PC-9 (cell line): ENCODE measurements at regions of chr9 and their contacts with region 1.

Region 1: DNA sequence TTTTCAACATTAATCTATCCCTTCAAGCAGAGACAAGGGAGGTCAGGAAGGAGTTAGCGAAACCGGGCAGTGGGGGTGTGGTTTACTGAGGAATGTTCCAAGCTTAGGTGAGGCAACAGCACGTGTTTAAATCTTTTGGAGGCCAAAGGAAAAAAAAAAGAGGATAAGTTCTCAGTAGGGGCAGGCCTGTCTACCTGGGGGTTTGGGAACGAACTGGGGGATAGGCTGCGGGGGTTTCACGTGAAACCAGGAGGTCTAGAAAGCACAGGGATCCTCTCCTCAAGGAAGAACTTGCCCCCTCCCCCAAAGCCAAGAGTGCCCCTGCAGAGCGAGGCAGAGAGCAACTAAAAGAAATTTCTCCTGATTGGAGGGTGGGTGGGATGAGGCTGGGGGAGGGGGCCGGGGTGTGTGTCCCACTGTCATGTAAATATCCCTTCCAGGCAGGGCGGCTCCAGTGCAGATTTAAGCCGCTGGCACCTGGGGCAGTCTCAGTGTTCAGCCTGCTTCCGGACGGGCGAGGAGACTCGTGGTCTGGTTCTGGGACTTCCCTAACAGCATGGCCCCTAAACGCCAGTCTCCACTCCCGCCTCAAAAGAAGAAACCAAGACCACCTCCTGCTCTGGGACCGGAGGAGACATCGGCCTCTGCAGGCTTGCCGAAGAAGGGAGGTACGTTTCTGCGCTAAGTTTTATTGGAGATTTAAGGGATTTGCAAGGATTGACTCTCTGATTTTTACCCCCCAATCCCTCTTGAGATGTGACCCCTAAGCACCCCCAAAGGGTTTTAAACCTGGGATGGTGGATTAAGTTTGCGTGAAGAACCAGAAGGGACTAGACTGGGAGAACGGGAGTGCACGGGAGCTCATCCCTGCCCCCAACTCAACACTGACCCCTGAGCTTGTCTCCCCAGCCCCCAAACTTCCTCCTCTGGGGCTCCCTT is 5.4 kb upstream of the SET start:
- DNase-seq: peak; percentile 75 to 88
- H3K4me3 ChIP-seq: peak overlapping the region; percentile 94
- H3K27ac ChIP-seq: peak overlapping the region; percentile 99
- H3K4me1 ChIP-seq: peaks cover 45% of the 10 kb centered on the region
- H3K27me3 ChIP-seq: no peaks in the 10 kb centered on the region
- CTCF ChIP-seq: no peak

Region 2: GRCh38 chr9:128656416-128657343 is 26.9 kb before region 1 on chr9 and contains the start of gene DYNC2I2:
- CTCF ChIA-PET with region 1: interaction called, 3 read pairs
- POLR2A ChIA-PET with region 1: interaction called, 3 read pairs
- intact Hi-C with region 1: loop called (anchors 1 kb)
- DNase-seq: peak; percentile 80 to 97
- H3K4me3 ChIP-seq: peak within 1 kb of the TSS; percentile 99
- H3K27ac ChIP-seq: peak within 1 kb of the TSS; percentile 98
- H3K4me1 ChIP-seq: peaks cover 8% of the 10 kb centered on the region; the same call in 1 of the 2 replicates
- H3K27me3 ChIP-seq: no peaks in the 10 kb centered on the region
- CTCF ChIP-seq: no peak
- total RNA-seq, gene DYNC2I2: 225 and 263 TPM in 2 replicates

Region 3: GRCh38 chr9:128669786-128670185 is 13.8 kb before region 1 on chr9:
- CTCF ChIA-PET with region 1: interaction called, 5 read pairs
- POLR2A ChIA-PET with region 1: interaction called, 11 read pairs
- intact Hi-C with region 1: loop called (anchors 1 kb)
- DNase-seq: no peak
- H3K4me3 ChIP-seq: no peak overlapping the region
- H3K27ac ChIP-seq: no peak overlapping the region
- H3K4me1 ChIP-seq: peaks cover 11% of the 10 kb centered on the region
- H3K27me3 ChIP-seq: no peaks in the 10 kb centered on the region
- CTCF ChIP-seq: no peak

Region 4: DNA sequence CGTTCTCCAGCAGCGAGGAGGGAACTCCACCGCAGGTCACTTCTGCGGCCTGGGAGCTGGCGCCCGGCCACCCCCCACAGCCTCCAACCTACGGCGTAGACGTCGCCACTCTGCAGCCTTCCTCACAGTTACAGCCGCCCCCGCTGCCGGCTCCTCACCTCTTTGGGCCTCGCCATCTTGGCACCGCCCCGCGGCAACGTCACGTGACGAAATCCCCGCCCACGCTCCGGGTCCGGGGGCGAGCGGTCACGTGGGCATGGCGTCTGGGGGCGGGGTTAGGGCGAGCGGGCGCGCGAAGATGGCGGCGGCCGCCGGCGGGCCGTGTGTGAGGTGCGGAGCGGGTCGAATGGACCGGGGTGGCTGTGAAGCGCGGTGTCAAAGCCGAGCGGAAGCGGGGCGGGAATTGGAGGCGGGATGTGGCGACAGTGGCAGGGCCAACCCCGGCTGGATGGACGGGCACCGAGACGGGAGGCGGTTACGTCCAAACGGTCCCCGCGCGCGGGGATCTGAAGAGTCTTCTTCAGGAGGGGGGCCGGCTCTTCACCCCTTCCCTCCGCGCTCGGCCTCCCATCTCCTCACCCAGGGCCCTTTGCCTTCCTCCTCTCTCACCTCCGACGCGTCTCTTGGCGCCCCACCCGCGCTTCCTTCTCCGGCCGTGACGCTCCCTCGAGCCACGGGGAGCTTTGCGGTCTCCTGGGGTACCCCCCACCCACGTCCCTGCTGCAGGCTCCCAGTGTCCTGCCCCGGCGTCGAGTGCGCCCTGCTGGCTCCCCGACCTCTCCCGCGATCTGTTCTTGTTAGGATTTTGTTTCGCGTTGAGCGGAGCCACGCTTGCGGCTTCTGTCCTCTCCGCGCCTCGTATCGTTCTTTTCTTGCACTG is 264.1 kb after region 1 on chr9 and contains the starts of genes DOLK and NUP188:
- CTCF ChIA-PET with region 1: no interaction called
- POLR2A ChIA-PET with region 1: no interaction called
- intact Hi-C with region 1: no loop called
- DNase-seq: peak; percentile 80 to 98
- H3K4me3 ChIP-seq: peak within 1 kb of the TSS; percentile 96
- H3K27ac ChIP-seq: peak within 1 kb of the TSS; percentile 61
- H3K4me1 ChIP-seq: peaks cover 6% of the 10 kb centered on the region; the same call in 1 of the 2 replicates
- H3K27me3 ChIP-seq: no peaks in the 10 kb centered on the region
- CTCF ChIP-seq: no peak
- total RNA-seq, gene DOLK: 18.0 and 19.0 TPM in 2 replicates
- total RNA-seq, gene NUP188: 59.7 and 90.0 TPM in 2 replicates